Transverse colon (tissue), 4 donors: ENCODE measurements at regions of chr18 and their contacts with region 1.

Region 1: GRCh38 chr18:49412679-49413078 is 47.8 kb downstream of the DYM start:
- DNase-seq: no peak
- H3K4me3 ChIP-seq: no peak overlapping the region
- H3K27ac ChIP-seq: no peak overlapping the region
- H3K4me1 ChIP-seq: peaks cover 0 to 4% (median 0%) of the 10 kb centered on the region in 4 donors
- H3K27me3 ChIP-seq: no peaks in the 10 kb centered on the region
- CTCF ChIP-seq: no peak
- EP300 ChIP-seq: no peak
- POLR2A ChIP-seq: no peak

Region 2: GRCh38 chr18:49342690-49343089 is 70.0 kb before region 1 on chr18:
- in situ Hi-C with region 1: no loop called
- intact Hi-C with region 1: loop called (anchors 2 kb)
- DNase-seq: no peak
- H3K4me3 ChIP-seq: no peak overlapping the region
- H3K27ac ChIP-seq: no peak overlapping the region
- H3K4me1 ChIP-seq: no peaks in the 10 kb centered on the region
- H3K27me3 ChIP-seq: no peaks in the 10 kb centered on the region
- CTCF ChIP-seq: no peak
- EP300 ChIP-seq: no peak
- POLR2A ChIP-seq: no peak